ENCODE measurements at regions of chr12 and their contacts with region 1.

Region 1: DNA sequence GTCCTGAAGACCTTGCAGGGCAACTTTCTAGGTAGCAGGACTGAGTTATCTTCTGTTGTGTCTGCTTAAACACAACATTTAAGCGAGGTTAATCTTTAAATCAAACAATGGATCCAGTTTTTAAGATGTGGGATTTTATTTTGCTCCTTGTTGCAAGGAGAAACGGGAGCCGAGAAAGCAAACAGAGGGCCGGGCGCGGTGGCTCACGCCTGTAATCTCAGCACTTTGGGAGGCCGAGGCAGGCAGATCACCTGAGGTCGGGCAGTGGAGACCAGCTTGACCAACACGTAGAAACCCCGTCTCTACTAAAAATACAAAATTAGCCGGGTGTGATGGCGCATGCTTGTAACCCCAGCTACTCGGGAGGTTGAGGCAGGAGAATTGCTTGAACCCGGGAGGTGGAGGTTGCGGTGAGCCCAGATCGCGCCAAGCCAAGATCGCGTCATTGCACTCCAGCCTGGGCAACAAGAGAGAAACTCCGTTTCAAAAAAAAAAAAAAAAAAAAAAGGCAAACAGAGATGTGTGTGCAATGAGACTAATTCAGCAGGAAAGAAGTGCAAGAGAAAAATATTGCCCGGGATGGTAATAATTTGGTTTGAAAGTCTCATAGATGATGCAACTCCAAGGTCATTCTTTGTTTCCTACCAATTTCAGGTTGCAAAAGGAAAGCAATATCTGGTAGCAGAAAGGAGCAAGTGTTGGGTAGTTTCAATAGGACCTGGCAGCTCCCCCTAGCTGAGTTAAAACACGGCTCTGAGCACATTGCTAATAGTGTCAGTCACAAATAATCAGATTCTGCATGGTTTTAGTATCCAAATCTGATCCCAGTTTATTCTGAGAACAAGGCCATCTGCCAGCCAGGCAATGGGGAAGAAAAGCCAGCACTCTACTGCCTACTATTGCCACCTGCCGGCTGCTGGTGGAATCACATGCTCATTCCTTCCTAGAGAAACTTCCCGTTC is 141.4 kb downstream of the PPM1H start:
- DNase-seq: peak; percentile 61 to 93
- H3K4me3 ChIP-seq: no peak overlapping the region
- H3K27ac ChIP-seq: no peak overlapping the region; the same call in 1 of the 2 replicates
- H3K4me1 ChIP-seq: peaks cover 0 to 7% (median 0%) of the 10 kb centered on the region in 4 experiments; a peak in 2 of 7 replicates
- H3K27me3 ChIP-seq: no peaks in the 10 kb centered on the region
- CTCF ChIP-seq: peak; percentile 71 to 87 (median 81)
- EP300 ChIP-seq: no peak
- POLR2A ChIP-seq: no peak
- RAD21 ChIP-seq: peak; percentile 98

Region 2: GRCh38 chr12:62588916-62589315 is 204.6 kb before region 1 on chr12:
- CTCF ChIA-PET with region 1: interaction called, 173 read pairs
- POLR2A ChIA-PET with region 1: interaction called, 4 read pairs
- DNase-seq: no peak
- H3K4me3 ChIP-seq: no peak overlapping the region
- H3K27ac ChIP-seq: no peak overlapping the region
- H3K4me1 ChIP-seq: no peaks in the 10 kb centered on the region
- H3K27me3 ChIP-seq: no peaks in the 10 kb centered on the region
- CTCF ChIP-seq: no peak
- EP300 ChIP-seq: no peak
- POLR2A ChIP-seq: no peak
- RAD21 ChIP-seq: no peak

Region 3: GRCh38 chr12:62703011-62703380 is 90.5 kb before region 1 on chr12:
- CTCF ChIA-PET with region 1: interaction called, 14 read pairs
- POLR2A ChIA-PET with region 1: no interaction called
- DNase-seq: no peak
- H3K4me3 ChIP-seq: no peak overlapping the region
- H3K27ac ChIP-seq: peak overlapping the region; percentile 27; the same call in 1 of the 2 replicates
- H3K4me1 ChIP-seq: peaks cover 3 to 7% (median 5%) of the 10 kb centered on the region in 4 experiments; a peak in 5 of 7 replicates
- H3K27me3 ChIP-seq: no peaks in the 10 kb centered on the region
- CTCF ChIP-seq: no peak
- EP300 ChIP-seq: no peak
- POLR2A ChIP-seq: no peak
- RAD21 ChIP-seq: no peak

Region 4: DNA sequence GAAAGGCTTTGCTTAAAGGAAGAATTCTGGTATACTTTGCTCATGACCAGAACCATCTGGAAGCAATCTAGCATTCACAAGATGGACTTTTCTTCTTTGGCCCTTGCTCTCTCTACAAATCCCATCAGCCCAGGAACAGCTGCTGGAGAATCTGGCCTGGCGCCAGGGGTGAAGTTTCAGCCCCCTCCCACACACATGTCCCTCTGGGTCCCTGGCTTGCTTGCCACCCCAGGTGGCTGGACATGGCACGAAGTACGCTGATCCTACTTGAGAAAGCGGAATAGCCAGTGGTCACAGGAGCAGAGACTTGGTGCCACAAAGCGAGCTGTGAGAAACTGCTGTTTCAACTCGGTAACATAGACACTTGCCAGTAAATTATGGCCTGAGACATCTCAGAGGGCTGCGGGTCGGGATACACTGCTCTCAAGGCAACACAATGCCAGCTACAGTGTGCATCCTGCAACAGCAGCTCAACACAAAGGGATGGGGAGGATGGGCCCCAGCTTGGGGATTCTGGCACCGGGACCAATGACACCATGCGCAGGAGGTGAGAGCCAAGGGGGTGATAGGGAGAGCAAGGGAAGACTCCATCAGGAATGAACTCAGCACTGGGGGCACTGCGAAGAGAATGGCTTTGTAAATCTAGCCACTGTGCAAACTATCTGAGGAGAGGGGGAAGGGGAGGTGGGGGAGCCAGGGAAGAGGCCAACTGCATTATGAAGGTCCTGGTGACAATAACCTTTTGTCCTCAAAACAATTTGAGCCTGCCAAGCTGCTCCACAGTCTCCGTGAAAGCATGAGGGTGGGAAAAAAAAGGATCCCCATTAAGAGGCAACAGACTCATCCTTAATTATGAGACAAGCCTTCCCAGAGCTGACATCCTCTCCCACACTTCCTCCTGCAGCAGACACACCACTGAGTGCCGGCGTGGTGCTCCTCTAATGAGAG is 78.5 kb before region 1 on chr12:
- CTCF ChIA-PET with region 1: interaction called, 13 read pairs
- POLR2A ChIA-PET with region 1: no interaction called
- DNase-seq: no peak
- H3K4me3 ChIP-seq: no peak overlapping the region
- H3K27ac ChIP-seq: no peak overlapping the region
- H3K4me1 ChIP-seq: peaks cover 0 to 12% (median 9%) of the 10 kb centered on the region in 4 experiments; a peak in 6 of 7 replicates
- H3K27me3 ChIP-seq: no peaks in the 10 kb centered on the region
- CTCF ChIP-seq: no peak
- EP300 ChIP-seq: no peak
- POLR2A ChIP-seq: no peak
- RAD21 ChIP-seq: no peak

Region 5: DNA sequence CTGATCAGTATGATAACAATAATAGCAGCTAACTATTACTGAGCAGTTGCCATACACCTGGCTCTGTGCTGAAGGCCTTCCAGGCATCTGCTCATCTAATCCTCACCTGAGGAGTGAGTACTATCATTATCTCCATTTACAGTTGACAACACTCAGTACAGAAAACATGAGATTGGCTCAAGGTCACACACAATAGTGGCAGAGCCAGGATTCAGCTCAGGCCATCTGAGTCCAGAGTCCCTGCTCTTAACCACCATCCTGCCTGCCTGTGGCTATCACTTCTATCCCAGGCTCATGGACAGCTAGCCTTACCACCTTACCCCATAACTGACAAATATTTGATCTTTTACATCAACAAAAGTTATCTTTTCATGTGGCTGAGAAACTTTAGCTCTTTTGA is 14.0 kb before region 1 on chr12:
- CTCF ChIA-PET with region 1: interaction called, 96 read pairs
- POLR2A ChIA-PET with region 1: interaction called, 5 read pairs
- DNase-seq: no peak
- H3K4me3 ChIP-seq: no peak overlapping the region
- H3K27ac ChIP-seq: no peak overlapping the region
- H3K4me1 ChIP-seq: peaks cover 0 to 6% (median 3%) of the 10 kb centered on the region in 4 experiments; a peak in 3 of 7 replicates
- H3K27me3 ChIP-seq: no peaks in the 10 kb centered on the region
- CTCF ChIP-seq: no peak
- EP300 ChIP-seq: no peak
- POLR2A ChIP-seq: no peak
- RAD21 ChIP-seq: no peak

Region 6: GRCh38 chr12:62841846-62842245 is 48.3 kb after region 1 on chr12:
- CTCF ChIA-PET with region 1: no interaction called
- POLR2A ChIA-PET with region 1: no interaction called
- DNase-seq: no peak
- H3K4me3 ChIP-seq: no peak overlapping the region
- H3K27ac ChIP-seq: no peak overlapping the region
- H3K4me1 ChIP-seq: peaks cover 0 to 14% (median 5%) of the 10 kb centered on the region in 4 experiments; a peak in 4 of 7 replicates
- H3K27me3 ChIP-seq: no peaks in the 10 kb centered on the region
- CTCF ChIP-seq: no peak
- EP300 ChIP-seq: no peak
- POLR2A ChIP-seq: no peak
- RAD21 ChIP-seq: no peak

Region 7: GRCh38 chr12:62866451-62867082 is 73.0 kb after region 1 on chr12:
- CTCF ChIA-PET with region 1: no interaction called
- POLR2A ChIA-PET with region 1: no interaction called
- DNase-seq: no peak
- H3K4me3 ChIP-seq: no peak overlapping the region
- H3K27ac ChIP-seq: no peak overlapping the region
- H3K4me1 ChIP-seq: peaks cover 0 to 18% (median 11%) of the 10 kb centered on the region in 4 experiments; a peak in 6 of 7 replicates
- H3K27me3 ChIP-seq: no peaks in the 10 kb centered on the region
- CTCF ChIP-seq: no peak
- EP300 ChIP-seq: no peak
- POLR2A ChIP-seq: no peak
- RAD21 ChIP-seq: no peak

Measured in H1 (cell line).